ENCODE measurements at regions of chr20 and their contacts with region 1.

Region 1: GRCh38 chr20:60137629-60138245 is 179.5 kb downstream of the CDH26 start:
- DNase-seq: peak in 4 of 9 donors; percentile 11 to 31 (median 18)
- ATAC-seq: peak; percentile 65
- H3K4me3 ChIP-seq: peak overlapping the region; percentile 48
- H3K4me3 Mint-ChIP-seq: peak overlapping the region; percentile 58 to 93 (median 80)
- H3K27ac ChIP-seq: no peak overlapping the region
- H3K27ac Mint-ChIP-seq: peak overlapping the region in 2 of 9 donors; percentile 4 to 33
- H3K4me1 ChIP-seq: no peaks in the 10 kb centered on the region
- H3K4me1 Mint-ChIP-seq: peaks cover 0 to 25% (median 14%) of the 10 kb centered on the region in 7 donors
- H3K27me3 ChIP-seq: no peaks in the 10 kb centered on the region
- H3K27me3 Mint-ChIP-seq: no peaks in the 10 kb centered on the region

Region 2: GRCh38 chr20:59891581-59891980 is 246.2 kb before region 1 on chr20:
- CTCF ChIA-PET with region 1: no interaction called
- POLR2A ChIA-PET with region 1: no interaction called
- intact Hi-C with region 1: no loop called
- DNase-seq: no peak
- ATAC-seq: no peak
- H3K4me3 ChIP-seq: no peak overlapping the region
- H3K4me3 Mint-ChIP-seq: no peak overlapping the region
- H3K27ac ChIP-seq: no peak overlapping the region
- H3K27ac Mint-ChIP-seq: peak overlapping the region in 2 of 9 donors; percentile 28 to 34
- H3K4me1 ChIP-seq: no peaks in the 10 kb centered on the region
- H3K4me1 Mint-ChIP-seq: no peaks in the 10 kb centered on the region
- H3K27me3 ChIP-seq: peaks cover 0 to 4% of the 10 kb centered on the region in 2 donors
- H3K27me3 Mint-ChIP-seq: peaks cover 0 to 4% (median 0%) of the 10 kb centered on the region in 5 donors

Region 3: GRCh38 chr20:59940174-59940971 is 197.4 kb before region 1 on chr20 and contains the starts of genes FAM217B and PPP1R3D:
- CTCF ChIA-PET with region 1: no interaction called
- POLR2A ChIA-PET with region 1: no interaction called
- intact Hi-C with region 1: loop called in 1 of 2 experiments (anchors 10 kb)
- DNase-seq: peak; percentile 82 to 95 (median 86)
- ATAC-seq: peak; percentile 98
- H3K4me3 ChIP-seq: peak within 1 kb of the TSS; percentile 99
- H3K4me3 Mint-ChIP-seq: peak within 1 kb of the TSS; percentile 96 to 99 (median 98)
- H3K27ac ChIP-seq: peak within 1 kb of the TSS; percentile 79
- H3K27ac Mint-ChIP-seq: peak within 1 kb of the TSS; percentile 95 to 99 (median 97)
- H3K4me1 ChIP-seq: peaks cover 17 to 23% of the 10 kb centered on the region in 2 donors
- H3K4me1 Mint-ChIP-seq: peaks cover 29 to 65% (median 49%) of the 10 kb centered on the region in 7 donors
- H3K27me3 ChIP-seq: no peaks in the 10 kb centered on the region
- H3K27me3 Mint-ChIP-seq: no peaks in the 10 kb centered on the region
- total RNA-seq, gene FAM217B: 19.3 to 47.4 (median 32.6) TPM
- total RNA-seq, gene PPP1R3D: 4.1 to 11.8 (median 7.5) TPM

Region 4: DNA sequence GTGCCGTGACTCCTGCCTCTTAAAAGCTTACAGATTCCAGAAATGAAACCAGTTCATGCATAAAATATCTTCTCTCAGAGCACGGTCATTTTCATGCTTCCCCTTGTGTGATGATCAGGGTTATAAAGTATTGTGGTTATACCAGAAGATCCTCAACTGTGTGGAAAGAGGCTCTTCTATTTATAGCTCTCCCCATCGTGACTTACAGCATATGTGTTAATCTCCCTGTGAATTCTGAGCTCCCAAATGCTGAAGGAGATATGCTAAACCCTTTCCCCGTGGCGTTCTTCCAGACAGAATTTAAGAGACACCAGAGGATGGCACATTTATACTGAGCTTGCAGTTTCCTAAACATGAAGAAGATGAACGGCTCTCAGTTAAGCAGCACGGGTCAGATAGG is 20.7 kb before region 1 on chr20:
- CTCF ChIA-PET with region 1: no interaction called
- POLR2A ChIA-PET with region 1: no interaction called
- intact Hi-C with region 1: no loop called
- DNase-seq: no peak
- ATAC-seq: peak; percentile 40
- H3K4me3 ChIP-seq: no peak overlapping the region
- H3K4me3 Mint-ChIP-seq: no peak overlapping the region
- H3K27ac ChIP-seq: no peak overlapping the region
- H3K27ac Mint-ChIP-seq: no peak overlapping the region
- H3K4me1 ChIP-seq: no peaks in the 10 kb centered on the region
- H3K4me1 Mint-ChIP-seq: peaks cover 0 to 12% (median 4%) of the 10 kb centered on the region in 7 donors
- H3K27me3 ChIP-seq: no peaks in the 10 kb centered on the region
- H3K27me3 Mint-ChIP-seq: peaks cover 0 to 21% (median 4%) of the 10 kb centered on the region in 5 donors

Region 5: DNA sequence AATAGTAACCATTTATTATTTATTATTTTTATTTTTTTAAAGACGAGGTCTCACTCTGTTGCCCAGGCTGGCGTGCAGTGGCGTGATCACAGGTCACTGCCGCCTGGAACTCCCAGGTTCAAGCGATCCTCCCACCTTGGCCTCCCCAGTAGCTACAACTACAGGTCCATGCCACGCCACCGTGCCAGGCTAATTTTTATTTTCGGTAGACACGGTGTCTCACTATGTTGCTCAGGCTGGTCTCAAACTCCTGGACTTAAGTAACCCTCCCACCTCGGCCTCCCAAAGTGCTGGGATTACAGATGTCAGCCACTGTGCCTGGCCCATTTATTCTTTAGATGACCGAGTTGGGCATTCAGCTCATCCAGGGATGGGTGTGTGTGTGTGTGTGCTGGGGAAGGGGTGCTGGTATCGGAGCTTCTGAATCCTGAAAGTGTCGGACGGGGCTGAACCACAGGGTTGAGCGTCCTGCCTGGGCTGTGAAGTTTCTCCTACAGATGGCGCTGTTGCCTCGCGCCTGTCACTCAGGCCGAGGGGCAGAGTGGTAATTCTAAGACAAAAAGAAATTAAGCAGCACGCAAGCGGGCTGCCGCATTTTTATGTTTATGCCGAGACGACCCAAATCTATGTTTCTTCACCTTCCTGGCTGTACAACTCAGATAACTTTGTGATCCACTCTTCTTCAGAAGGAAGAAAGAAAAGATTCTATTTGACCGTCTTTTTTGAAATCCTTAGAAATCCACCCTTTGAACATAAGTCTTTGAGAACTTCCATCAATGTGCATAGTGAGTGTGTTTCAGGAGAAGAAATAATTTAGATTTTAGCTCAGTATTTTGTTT is 73.3 kb after region 1 on chr20:
- CTCF ChIA-PET with region 1: no interaction called
- POLR2A ChIA-PET with region 1: no interaction called
- intact Hi-C with region 1: loop called in 1 of 2 experiments (anchors 5 kb)
- DNase-seq: peak in 8 of 9 donors; percentile 20 to 61 (median 46)
- ATAC-seq: peak; percentile 81
- H3K4me3 ChIP-seq: no peak overlapping the region
- H3K4me3 Mint-ChIP-seq: peak overlapping the region in 1 of 10 donors; percentile 20
- H3K27ac ChIP-seq: no peak overlapping the region
- H3K27ac Mint-ChIP-seq: no peak overlapping the region
- H3K4me1 ChIP-seq: no peaks in the 10 kb centered on the region
- H3K4me1 Mint-ChIP-seq: peaks cover 0 to 17% (median 4%) of the 10 kb centered on the region in 7 donors
- H3K27me3 ChIP-seq: no peaks in the 10 kb centered on the region
- H3K27me3 Mint-ChIP-seq: peaks cover 0 to 16% (median 2%) of the 10 kb centered on the region in 5 donors

Region 6: DNA sequence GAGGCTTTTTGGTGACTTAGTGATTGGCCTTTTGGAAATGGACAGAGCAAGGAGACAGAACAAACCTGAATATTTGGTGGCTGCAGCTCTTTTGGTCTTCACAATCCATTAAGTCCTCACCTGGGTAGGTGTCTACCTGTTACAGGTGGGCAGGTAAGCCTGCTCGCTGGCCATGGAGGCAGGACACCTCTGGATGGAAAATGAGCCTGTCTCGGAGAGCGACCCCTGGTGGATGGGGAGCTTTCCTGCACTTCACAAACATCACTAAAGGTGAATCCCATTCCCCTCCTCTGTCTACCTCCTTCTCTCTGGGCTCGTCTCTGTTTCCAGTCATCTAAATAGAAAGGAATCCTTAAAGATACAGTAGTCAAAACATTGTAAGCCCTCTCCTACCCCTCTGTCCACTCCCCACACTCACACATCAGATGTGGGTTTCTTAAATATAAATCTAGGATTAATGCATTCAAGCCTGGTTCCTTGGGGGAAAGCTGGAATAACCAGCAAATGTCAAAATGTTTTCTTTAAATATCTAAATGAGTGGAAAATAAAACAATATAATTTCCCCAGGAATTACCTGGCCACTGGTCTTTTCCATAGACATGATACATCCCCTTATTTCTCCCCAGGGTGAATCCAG is 125.3 kb after region 1 on chr20:
- CTCF ChIA-PET with region 1: interaction called, 3 read pairs
- POLR2A ChIA-PET with region 1: no interaction called
- intact Hi-C with region 1: loop called in 1 of 2 experiments (anchors 1 kb)
- DNase-seq: peak in 8 of 9 donors; percentile 26 to 57 (median 43)
- ATAC-seq: peak; percentile 52
- H3K4me3 ChIP-seq: no peak overlapping the region
- H3K4me3 Mint-ChIP-seq: no peak overlapping the region
- H3K27ac ChIP-seq: no peak overlapping the region
- H3K27ac Mint-ChIP-seq: no peak overlapping the region
- H3K4me1 ChIP-seq: peaks cover 0 to 10% of the 10 kb centered on the region in 2 donors
- H3K4me1 Mint-ChIP-seq: peaks cover 4 to 33% (median 23%) of the 10 kb centered on the region in 7 donors
- H3K27me3 ChIP-seq: no peaks in the 10 kb centered on the region
- H3K27me3 Mint-ChIP-seq: no peaks in the 10 kb centered on the region

Region 7: GRCh38 chr20:61886721-61887594 is 1749.2 kb after region 1 on chr20:
- CTCF ChIA-PET with region 1: no interaction called
- POLR2A ChIA-PET with region 1: no interaction called
- intact Hi-C with region 1: loop called in 1 of 2 experiments (anchors 10 kb)
- DNase-seq: peak in 7 of 9 donors; percentile 6 to 35 (median 14)
- ATAC-seq: no peak
- H3K4me3 ChIP-seq: no peak overlapping the region
- H3K4me3 Mint-ChIP-seq: no peak overlapping the region
- H3K27ac ChIP-seq: no peak overlapping the region
- H3K27ac Mint-ChIP-seq: no peak overlapping the region
- H3K4me1 ChIP-seq: no peaks in the 10 kb centered on the region
- H3K4me1 Mint-ChIP-seq: peaks cover 0 to 5% (median 4%) of the 10 kb centered on the region in 7 donors
- H3K27me3 ChIP-seq: no peaks in the 10 kb centered on the region
- H3K27me3 Mint-ChIP-seq: peaks cover 0 to 21% (median 17%) of the 10 kb centered on the region in 5 donors